ENCODE measurements at regions of chr1 and their contacts with region 1.

Region 1: DNA sequence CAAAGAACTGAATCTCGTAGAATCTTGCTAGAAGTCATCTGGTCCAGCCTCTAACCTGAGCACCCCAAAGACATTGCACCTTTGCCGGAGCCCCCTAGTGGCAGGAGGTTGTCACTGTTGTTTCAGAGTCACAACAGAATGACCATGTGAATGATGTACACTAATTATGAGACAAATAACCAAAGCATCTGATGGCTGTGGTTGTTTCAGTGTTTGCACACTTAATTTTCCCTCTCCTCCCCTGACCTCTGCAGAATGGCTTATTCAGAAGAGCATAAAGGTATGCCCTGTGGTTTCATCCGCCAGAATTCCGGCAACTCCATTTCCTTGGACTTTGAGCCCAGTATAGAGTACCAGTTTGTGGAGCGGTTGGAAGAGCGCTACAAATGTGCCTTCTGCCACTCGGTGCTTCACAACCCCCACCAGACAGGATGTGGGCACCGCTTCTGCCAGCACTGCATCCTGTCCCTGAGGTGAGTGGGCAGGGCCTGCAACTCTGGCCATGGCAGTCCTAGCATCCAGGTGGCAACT is 26.4 kb downstream of the TRAF5 start:
- DNase-seq: peak in 7 of 9 donors; percentile 28 to 53 (median 45)
- ATAC-seq: peak; percentile 83
- H3K4me3 ChIP-seq: peak overlapping the region; percentile 45
- H3K4me3 Mint-ChIP-seq: peak overlapping the region; percentile 78 to 92 (median 84)
- H3K27ac ChIP-seq: peak overlapping the region; percentile 16
- H3K27ac Mint-ChIP-seq: peak overlapping the region; percentile 81 to 98 (median 91)
- H3K4me1 ChIP-seq: peaks cover 31 to 46% of the 10 kb centered on the region in 2 donors
- H3K4me1 Mint-ChIP-seq: peaks cover 42 to 74% (median 65%) of the 10 kb centered on the region in 7 donors
- H3K27me3 ChIP-seq: no peaks in the 10 kb centered on the region
- H3K27me3 Mint-ChIP-seq: no peaks in the 10 kb centered on the region

Region 2: GRCh38 chr1:211236633-211237320 is 116.3 kb before region 1 on chr1:
- CTCF ChIA-PET with region 1: no interaction called
- POLR2A ChIA-PET with region 1: no interaction called
- intact Hi-C with region 1: no loop called
- DNase-seq: no peak
- ATAC-seq: no peak
- H3K4me3 ChIP-seq: no peak overlapping the region
- H3K4me3 Mint-ChIP-seq: no peak overlapping the region
- H3K27ac ChIP-seq: no peak overlapping the region
- H3K27ac Mint-ChIP-seq: no peak overlapping the region
- H3K4me1 ChIP-seq: no peaks in the 10 kb centered on the region
- H3K4me1 Mint-ChIP-seq: peaks cover 0 to 3% (median 0%) of the 10 kb centered on the region in 7 donors
- H3K27me3 ChIP-seq: no peaks in the 10 kb centered on the region
- H3K27me3 Mint-ChIP-seq: peaks cover 0 to 16% (median 0%) of the 10 kb centered on the region in 5 donors

Region 3: GRCh38 chr1:211335522-211336157 is 17.4 kb before region 1 on chr1:
- CTCF ChIA-PET with region 1: interaction called, 3 read pairs
- POLR2A ChIA-PET with region 1: interaction called, 4 read pairs
- intact Hi-C with region 1: loop called (anchors 1 to 2 kb)
- DNase-seq: peak in 6 of 9 donors; percentile 24 to 36 (median 33)
- ATAC-seq: peak; percentile 72
- H3K4me3 ChIP-seq: peak overlapping the region; percentile 43
- H3K4me3 Mint-ChIP-seq: peak overlapping the region; percentile 77 to 87 (median 80)
- H3K27ac ChIP-seq: peak overlapping the region; percentile 69
- H3K27ac Mint-ChIP-seq: peak overlapping the region; percentile 78 to 97 (median 87)
- H3K4me1 ChIP-seq: peaks cover 72 to 85% of the 10 kb centered on the region in 2 donors
- H3K4me1 Mint-ChIP-seq: peaks cover 72 to 97% (median 85%) of the 10 kb centered on the region in 7 donors
- H3K27me3 ChIP-seq: no peaks in the 10 kb centered on the region
- H3K27me3 Mint-ChIP-seq: no peaks in the 10 kb centered on the region